Activated CD8-positive, alpha-beta T cell treated with anti-CD3 and anti-CD28 coated beads, Interleukin-2, amount 10 ng/mL, durations not matched to agents 7 days and 5 days (primary cell): ENCODE measurements at regions of chr22 and their contacts with region 1.

Region 1: DNA sequence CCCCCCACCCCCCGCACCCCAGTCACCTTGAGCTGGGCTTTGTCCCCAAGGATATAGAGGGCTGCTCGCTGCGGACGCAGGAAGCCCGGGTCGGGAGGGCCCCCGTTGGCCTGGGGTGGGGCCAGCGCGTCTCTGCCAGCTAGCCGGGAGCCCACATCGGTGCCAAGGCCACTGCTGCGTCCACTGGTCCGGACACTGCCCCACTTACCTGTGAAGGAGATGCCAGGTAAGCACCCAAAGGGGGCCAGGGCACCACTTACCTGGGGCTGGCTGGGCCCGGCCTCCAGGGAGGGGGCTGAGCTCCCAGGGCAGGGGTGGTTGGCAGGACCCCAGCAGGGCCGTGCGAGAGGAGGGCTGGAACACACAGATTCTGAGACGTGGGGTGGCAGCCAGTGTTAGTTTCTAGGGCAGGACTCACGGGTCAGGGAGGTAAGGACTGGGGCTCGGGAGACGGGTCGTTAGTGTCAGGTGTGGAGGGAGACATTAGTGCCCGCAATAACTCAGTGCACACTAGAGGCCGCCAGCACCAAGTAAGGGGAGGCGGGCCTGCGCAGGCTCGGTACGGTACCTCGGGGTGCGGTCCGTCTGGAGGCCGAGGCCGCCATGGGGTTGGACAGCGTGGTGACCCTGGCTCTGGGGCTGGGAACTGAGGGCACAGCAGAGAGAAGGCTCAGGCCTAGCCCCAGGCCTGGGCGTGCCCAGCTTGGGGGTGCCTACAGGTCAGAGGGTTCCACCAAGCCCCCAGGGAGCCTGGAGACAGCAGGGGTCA is 18.2 kb downstream of the SBF1 start:
- DNase-seq: no peak
- ATAC-seq: peak; percentile 34
- H3K4me3 Mint-ChIP-seq: no peak overlapping the region
- H3K27ac Mint-ChIP-seq: no peak overlapping the region
- H3K4me1 Mint-ChIP-seq: peaks cover 2% of the 10 kb centered on the region
- H3K27me3 Mint-ChIP-seq: no peaks in the 10 kb centered on the region

Region 2: DNA sequence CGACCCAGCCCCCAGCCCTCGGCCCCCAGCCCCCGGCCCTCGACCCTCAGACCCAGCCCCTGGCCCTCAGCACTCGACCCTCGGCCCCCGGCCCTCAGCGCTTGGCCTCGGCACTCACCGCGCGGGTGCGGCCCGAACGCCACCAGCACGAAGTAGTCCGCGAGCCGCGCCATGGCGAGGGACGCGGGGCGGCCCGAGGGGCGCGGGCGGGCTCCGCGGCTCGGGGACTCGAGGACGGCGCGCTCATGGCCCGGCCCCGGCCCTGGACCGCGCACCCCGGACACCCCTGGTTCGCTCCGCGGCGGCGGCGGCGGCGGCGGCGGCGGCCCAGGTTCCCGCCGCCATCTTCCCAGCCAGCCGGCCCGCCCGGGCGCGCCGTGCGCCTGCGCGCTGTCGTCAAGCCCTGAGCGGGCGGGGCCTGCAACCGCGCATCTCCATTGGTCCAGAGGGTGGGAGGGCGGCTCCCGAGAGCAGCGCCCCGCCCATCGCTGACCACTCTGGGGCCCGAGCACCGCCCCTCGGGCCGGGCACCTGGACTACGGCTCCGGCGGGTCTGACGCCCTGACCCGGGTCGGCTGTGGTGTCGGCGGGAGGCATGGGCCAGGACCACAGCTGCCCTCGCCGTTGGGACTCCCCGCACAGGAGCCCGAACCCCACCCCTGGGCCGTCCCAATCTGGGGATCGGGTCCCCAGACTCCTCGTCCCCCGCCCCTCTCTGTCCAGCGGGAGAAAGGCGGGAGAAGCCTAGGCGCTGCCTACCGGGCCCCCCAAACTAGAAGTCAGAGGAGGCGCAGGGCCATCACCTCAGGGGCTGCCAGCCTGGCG is 18.2 kb after region 1 on chr22 and contains the start of gene SBF1:
- CTCF ChIA-PET with region 1: interaction called, 11 read pairs
- POLR2A ChIA-PET with region 1: interaction called, 5 read pairs
- DNase-seq: peak; percentile 91
- ATAC-seq: peak; percentile 76
- H3K4me3 Mint-ChIP-seq: peak within 1 kb of the TSS; percentile 93
- H3K27ac Mint-ChIP-seq: peak within 1 kb of the TSS; percentile 84
- H3K4me1 Mint-ChIP-seq: peaks cover 57% of the 10 kb centered on the region
- H3K27me3 Mint-ChIP-seq: peaks cover 13% of the 10 kb centered on the region
- total RNA-seq, gene SBF1: 177 to 183 TPM

Region 3: DNA sequence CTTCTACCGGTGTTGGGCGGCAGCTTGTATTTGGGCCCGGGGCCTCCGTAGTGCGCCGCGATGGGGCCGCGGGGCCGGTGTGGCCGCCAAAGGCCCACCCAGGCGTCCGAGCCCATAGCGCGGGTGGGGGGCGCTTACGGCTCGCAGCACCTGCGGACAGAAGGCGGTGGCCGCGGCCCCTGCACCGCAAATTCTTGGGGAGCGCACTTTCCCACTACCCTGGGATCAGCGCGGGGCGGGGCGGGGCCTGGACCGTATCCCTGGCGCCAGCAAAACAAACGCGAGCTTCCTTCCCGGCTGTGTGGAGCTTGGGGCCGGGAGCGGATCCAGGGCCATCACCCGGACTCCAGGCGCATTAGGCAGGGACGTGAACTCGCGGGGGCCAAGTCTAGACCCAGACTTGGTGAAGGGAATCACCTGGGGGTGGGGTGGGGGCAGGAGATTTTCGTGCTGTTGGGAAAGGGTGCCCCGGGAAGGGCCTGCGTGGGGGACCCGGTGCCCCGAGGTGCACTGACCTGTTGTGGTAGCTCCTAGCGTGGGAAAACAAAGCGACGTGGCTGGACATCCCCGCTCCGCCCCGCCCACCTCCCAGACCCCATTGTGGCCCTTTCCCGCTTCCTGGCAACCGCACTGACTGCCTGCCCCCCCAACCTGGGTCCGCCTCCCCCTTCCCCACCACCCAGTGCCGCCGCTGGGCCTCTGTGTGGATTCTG is 75.5 kb after region 1 on chr22:
- CTCF ChIA-PET with region 1: no interaction called
- POLR2A ChIA-PET with region 1: no interaction called
- DNase-seq: no peak
- ATAC-seq: no peak
- H3K4me3 Mint-ChIP-seq: peak overlapping the region; percentile 94
- H3K27ac Mint-ChIP-seq: peak overlapping the region; percentile 100
- H3K4me1 Mint-ChIP-seq: peaks cover 53% of the 10 kb centered on the region
- H3K27me3 Mint-ChIP-seq: no peaks in the 10 kb centered on the region